Posterior vena cava (tissue), 2 donors: ENCODE measurements at regions of chr9 and their contacts with region 1.

Region 1: DNA sequence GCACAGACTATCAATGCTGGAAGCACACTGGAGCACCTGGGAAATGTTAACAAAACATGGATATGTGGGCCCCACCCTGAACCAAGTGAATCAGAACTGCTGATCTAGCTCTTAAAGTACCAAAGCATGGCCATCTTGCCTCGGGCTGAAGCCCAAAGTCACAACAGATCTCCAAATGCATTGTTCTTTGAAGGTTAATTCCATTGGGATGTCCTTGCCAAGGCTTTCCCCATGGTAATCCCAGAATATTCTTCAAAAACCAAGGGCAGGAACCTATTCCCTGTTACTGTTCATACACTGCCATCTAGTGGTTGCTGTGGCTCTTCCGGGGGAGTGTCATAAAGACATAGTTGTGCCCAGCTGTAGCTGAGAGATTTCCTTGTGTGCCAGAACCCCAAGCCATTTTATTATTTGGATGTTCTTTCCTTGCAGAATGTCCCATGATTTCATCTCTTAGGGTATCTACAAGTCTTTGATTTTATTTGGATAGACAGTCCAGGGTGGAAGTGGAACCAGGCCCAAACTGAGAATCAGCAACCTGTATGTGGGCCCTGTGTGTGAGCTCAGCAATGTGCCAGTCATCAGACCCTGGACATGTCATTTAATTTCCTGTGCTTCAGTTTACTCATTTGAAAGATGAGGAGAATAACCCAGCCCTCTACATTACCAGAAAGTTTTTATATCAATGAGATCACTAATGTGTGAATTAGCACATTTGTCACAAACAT is 290.0 kb downstream of the ACTL7B start:
- DNase-seq: no peak

Region 2: DNA sequence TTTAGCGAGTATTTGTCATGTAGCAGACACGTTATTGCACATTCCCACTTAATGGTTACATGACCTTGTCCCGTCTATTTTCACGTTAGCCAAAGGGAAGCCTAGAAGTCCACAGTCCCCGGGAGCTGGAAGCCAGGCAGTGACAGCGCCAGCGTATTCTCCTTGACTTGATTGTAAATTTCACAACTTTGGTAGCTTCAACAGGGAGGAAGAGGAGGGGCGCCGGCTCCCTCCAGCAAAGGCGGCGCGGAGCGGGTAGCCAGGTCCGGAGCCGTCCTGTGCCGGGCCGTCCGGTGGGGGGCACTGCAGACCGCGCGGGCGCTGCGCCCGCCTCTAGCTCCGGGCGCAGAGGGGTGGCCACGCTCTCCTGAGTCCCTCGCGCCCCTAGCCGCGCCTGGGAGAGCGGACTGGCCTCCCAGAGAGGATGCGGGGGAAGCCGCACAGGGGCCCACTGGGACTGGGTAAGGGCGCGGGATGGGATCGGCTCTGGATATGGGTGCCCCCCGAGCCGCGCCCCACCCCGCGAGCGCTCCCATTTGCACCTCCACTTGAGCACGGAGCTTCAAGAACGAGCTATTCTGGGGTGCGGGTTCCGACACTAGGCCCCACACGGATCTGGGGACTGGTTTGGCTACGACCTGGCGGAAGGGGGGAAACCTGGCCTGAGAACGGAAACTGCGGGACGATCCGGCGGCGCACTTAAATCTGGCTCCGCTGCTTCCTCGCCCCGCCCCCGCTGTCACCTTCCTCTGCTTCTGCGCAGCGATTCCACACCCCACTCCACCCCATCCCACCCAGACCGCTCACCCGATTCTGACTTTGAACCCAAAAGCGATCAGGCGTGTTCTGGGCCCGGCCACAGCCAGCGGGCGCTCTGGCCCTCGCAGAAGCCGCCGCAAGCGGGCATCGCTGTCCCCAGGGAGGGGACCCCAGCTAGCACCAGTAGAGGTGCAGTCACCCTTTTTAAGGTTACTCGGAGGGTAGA is 1100.1 kb before region 1 on chr9:
- intact Hi-C with region 1: loop called in 1 of 2 experiments (anchors 5 kb)
- DNase-seq: peak; percentile 94

Region 3: DNA sequence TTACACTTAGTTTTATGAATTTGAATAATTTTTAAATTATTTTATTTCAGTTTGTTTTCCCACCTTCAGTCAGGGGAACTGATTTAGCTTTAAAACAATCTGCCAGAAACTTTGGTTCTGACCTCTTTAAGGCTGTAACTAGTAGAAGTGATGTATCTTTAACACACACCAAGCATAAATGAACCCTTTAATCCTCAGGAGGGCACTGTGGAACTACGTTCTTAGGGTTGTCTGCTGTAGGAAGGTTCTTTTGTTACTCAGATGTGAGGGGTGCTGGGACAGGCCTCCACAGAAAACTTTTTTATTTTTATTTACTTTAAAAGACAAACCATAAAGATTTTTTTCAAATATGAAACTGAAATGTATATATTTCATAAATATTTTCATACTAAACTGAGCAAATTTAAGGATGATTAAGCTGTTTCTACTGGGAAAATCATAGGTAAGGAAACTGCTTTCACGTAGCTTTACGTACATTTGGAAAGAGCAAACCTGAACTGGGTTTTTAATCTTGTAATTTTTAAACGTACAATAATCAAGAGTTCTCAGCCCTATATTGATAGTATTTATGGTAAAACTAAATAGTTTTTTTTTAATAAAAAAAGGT is 1081.6 kb before region 1 on chr9:
- intact Hi-C with region 1: loop called in 1 of 2 experiments (anchors 5 kb)
- DNase-seq: no peak